AG04449 (cell line): ENCODE measurements at regions of chr2 and their contacts with region 1.

Region 1: GRCh38 chr2:47043142-47043890 is 111.8 kb downstream of the STPG4 start:
- DNase-seq: no peak
- H3K4me3 ChIP-seq: peak overlapping the region; percentile 31
- CTCF ChIP-seq: no peak

Region 2: DNA sequence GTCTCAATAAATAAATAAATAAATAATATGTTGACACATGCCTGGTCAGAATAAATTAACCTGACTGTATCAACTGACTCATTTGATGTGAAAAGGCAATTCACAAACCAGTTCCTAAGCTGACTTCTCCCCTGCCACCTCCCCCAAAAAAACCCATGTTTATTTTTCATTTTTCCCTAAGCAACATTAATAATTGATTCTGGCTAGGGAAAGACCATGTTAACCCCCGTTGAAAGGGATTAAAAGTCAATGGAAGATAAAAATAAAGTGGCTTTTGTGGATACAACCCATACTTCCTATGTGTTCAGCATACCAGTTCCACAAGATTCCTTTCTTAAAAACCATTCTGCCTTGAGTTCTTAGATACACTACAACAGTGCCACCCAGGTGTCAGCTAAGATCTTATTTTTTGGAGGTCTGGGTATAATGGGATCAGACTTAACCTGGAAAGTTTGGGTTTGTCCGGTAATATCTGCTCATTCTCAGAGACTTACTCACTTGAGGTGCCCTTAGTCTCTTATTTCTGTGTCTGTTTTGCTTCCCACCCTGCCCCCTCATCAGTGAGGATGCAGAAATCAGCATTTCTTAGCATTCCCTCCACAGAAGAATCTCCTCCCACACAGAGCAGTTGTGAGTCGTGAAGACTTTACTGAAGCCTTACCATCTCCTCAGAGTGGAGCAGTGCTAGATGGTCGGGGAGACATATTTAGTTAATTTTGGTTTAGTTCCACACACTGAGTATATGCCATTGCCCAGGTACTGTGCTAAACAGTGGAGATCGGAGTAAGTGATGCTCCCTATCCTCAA is 117.6 kb before region 1 on chr2:
- CTCF ChIA-PET with region 1: no interaction called
- POLR2A ChIA-PET with region 1: no interaction called
- DNase-seq: no peak
- H3K4me3 ChIP-seq: no peak overlapping the region
- CTCF ChIP-seq: no peak

Region 3: GRCh38 chr2:47058003-47058931 is 15.0 kb after region 1 on chr2:
- CTCF ChIA-PET with region 1: interaction called, 6 read pairs
- POLR2A ChIA-PET with region 1: interaction called, 10 read pairs
- DNase-seq: no peak
- H3K4me3 ChIP-seq: no peak overlapping the region
- CTCF ChIP-seq: no peak

Region 4: DNA sequence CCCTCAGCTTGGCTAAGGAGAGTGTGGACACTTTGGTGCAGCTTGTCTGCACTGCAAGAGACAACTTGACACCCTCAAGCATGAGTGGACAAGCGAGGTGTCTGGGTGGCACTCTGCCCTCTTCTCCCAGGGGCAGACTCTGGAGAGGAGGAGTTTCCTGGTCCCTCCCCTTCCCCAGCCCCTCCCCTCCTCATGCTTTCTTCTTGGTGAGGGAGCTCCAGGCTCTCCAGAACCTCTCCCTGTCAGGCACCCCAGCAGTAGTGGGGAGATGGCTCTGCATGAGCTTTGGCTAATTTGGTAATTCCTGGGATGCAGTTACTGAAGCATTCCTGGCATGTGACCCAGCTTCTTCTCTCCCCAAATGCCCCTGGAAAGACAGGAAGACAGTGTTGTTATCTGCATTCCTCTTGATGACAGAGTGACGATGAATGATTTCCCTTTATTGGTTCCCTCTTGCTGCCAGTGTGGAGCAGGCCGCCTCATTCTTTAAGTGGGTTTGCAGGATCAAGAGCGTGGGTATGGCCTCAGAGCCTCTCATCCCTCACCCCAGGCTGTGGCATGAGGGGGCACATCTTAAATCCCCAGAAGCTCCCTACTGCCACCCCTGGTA is 22.6 kb after region 1 on chr2:
- CTCF ChIA-PET with region 1: interaction called, 3 read pairs
- POLR2A ChIA-PET with region 1: interaction called, 25 read pairs
- DNase-seq: peak; percentile 98
- H3K4me3 ChIP-seq: no peak overlapping the region
- CTCF ChIP-seq: no peak